Dendritic cell treated with granulocyte-macrophage colony-stimulating factor and Interleukin-4, amounts not matched to agents 40 ng/mL and 50 ng/mL, for 4 days (primary cell): ENCODE measurements at regions of chr17 and their contacts with region 1.

Region 1: GRCh38 chr17:78013683-78014467 is 55.4 kb downstream of the TNRC6C start:
- H3K4me3 Mint-ChIP-seq: no peak overlapping the region
- H3K27ac Mint-ChIP-seq: no peak overlapping the region
- H3K4me1 Mint-ChIP-seq: peaks cover 7% of the 10 kb centered on the region
- H3K27me3 Mint-ChIP-seq: no peaks in the 10 kb centered on the region

Region 2: DNA sequence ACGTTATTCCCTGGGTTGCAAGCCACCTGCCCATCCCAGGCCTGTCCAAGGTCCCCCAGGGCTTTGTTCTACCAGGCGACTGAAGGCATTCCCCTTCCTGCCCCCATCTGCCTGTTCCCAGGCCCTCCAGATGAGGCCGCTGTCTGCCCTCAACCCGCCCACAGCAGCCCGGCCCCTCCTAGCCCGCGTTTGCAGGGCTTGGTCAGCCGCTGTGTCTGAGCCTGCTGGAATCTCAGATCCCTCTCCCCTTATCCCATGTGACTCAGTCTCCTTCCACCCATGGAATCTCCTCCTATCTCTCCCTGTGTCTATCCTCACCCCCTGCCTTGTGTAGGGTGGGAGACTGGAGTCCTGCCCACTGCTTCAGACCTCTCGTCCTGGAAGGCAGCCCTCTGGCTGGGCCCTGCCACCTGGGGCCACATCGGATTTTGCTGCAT is 241.4 kb before region 1 on chr17:
- intact Hi-C with region 1: loop called (anchors 1 kb)
- H3K4me3 Mint-ChIP-seq: no peak overlapping the region
- H3K27ac Mint-ChIP-seq: no peak overlapping the region
- H3K4me1 Mint-ChIP-seq: peaks cover 10% of the 10 kb centered on the region
- H3K27me3 Mint-ChIP-seq: peaks cover 58% of the 10 kb centered on the region

Region 3: DNA sequence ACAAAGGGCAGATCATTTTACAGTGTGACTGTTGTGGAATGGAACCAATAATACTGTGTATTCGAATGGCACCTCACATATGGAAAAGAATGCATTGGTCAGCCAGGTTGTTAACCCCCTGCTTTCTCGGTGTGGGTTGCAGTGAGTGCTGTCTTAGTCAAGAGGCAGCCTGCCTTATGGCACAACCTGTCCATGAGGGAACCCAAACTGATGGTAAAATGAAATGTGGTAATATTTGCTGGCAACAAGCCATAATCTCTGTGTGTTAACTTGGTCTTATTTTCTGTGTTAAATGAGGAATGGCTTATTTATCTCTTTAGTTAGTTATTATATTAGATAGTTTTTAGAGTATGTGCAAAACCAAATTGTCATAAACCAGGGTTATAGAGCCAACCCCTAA is 33.0 kb after region 1 on chr17:
- intact Hi-C with region 1: no loop called
- H3K4me3 Mint-ChIP-seq: no peak overlapping the region
- H3K27ac Mint-ChIP-seq: no peak overlapping the region
- H3K4me1 Mint-ChIP-seq: peaks cover 5% of the 10 kb centered on the region
- H3K27me3 Mint-ChIP-seq: no peaks in the 10 kb centered on the region

Region 4: GRCh38 chr17:78140169-78140976 is 126.5 kb after region 1 on chr17:
- intact Hi-C with region 1: no loop called
- H3K4me3 Mint-ChIP-seq: peak overlapping the region; percentile 61
- H3K27ac Mint-ChIP-seq: peak overlapping the region; percentile 88
- H3K4me1 Mint-ChIP-seq: peaks cover 96% of the 10 kb centered on the region
- H3K27me3 Mint-ChIP-seq: no peaks in the 10 kb centered on the region

Region 5: DNA sequence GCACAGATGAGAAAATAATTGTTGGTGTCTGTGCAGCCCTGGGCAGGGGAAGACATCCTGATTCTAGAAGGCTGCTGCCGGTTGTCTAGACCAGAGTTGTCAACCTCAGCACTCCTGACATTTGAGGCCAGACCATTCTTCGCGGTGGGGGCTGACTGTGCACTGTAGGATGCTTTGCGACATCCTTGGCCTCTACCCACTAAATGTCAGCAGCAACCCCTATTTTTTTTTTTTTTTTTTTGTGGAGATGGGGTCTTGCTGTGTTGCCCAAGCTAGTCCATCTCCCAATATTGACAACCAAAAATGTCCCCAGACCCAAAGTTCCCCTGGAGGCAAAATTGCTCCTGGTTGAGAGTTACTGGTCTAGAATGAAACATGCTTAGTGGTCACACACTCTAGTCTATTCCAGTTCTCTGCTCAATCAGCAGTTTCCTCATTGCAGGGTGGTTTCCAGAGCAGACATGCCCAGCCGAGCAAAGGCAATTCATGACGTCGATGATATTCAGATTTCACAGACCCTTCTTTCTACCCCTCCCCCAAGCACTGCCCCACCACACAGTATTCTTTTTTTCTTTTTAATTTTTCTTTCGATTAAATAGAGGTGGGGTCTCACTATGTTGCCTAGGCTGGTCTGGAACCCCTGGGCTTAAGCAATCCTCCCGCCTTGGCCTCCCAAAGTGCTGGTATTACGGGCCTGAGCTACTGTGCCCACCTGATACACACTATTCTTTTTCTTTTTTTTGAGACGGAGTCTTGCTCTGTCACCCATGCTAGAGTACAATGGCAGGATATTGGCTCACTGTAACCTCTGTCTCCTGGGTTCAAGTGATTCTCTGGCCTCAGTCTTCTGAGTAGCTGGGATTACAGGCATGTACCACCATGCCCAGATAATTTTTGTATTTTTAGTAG is 141.3 kb after region 1 on chr17:
- intact Hi-C with region 1: no loop called
- H3K4me3 Mint-ChIP-seq: no peak overlapping the region
- H3K27ac Mint-ChIP-seq: peak overlapping the region; percentile 85
- H3K4me1 Mint-ChIP-seq: peaks cover 36% of the 10 kb centered on the region
- H3K27me3 Mint-ChIP-seq: no peaks in the 10 kb centered on the region